Heart right ventricle (tissue), 16 donors: ENCODE measurements at regions of chr5 and their contacts with region 1.

Region 1: GRCh38 chr5:111735583-111736270 is 21.3 kb downstream of the NREP start:
- DNase-seq: peak in 1 of 2 donors; percentile 36
- ATAC-seq: peak; percentile 47 to 83 (median 58)
- H3K4me3 ChIP-seq: no peak overlapping the region
- H3K27ac ChIP-seq: peak overlapping the region in 2 of 10 donors; percentile 11 to 18
- H3K4me1 ChIP-seq: peaks cover 3 to 77% (median 40%) of the 10 kb centered on the region in 9 donors
- H3K27me3 ChIP-seq: no peaks in the 10 kb centered on the region
- CTCF ChIP-seq: no peak

Region 2: DNA sequence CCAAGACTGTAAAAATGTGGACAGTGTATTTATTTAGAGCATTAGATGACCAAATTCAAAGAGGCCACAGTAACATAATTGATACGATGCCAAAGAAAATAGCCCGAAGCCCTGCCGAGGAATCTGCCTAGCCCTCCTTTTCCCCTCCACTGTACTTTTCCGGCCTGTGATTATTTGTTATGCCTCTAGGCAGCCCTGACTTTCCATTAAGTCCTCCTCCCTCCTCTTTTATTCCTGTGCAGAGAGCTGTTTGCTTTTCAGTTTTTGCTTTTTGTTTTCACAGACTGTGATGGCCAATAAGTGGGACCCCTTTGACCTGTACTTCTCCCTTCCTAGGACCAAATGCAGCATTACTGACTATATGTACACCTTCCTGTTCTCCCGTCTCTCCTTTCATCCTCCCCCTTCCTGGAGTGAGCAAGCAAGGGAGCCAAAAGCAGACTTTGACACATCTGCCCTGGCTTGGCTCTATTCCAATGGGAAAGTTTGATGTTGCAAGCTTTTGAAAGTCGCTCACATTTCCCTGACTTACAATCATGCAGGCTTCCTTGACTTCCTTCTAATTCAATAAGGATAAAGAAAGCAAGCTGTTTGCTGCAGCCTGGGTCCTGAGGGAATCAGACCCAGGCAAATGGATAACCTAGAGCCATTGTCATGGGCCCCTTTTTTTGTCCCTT is 54.9 kb before region 1 on chr5:
- intact Hi-C with region 1: loop called in 1 of 10 experiments (anchors 5 kb)
- DNase-seq: peak; percentile 14 to 88
- ATAC-seq: peak; percentile 80 to 93 (median 86)
- H3K4me3 ChIP-seq: peak overlapping the region in 4 of 10 donors; percentile 5 to 32 (median 20)
- H3K27ac ChIP-seq: peak overlapping the region in 9 of 10 donors; percentile 23 to 80 (median 67)
- H3K4me1 ChIP-seq: peaks cover 0 to 52% (median 32%) of the 10 kb centered on the region in 9 donors
- H3K27me3 ChIP-seq: no peaks in the 10 kb centered on the region
- CTCF ChIP-seq: no peak

Region 3: GRCh38 chr5:111984044-111984443 is 248.3 kb after region 1 on chr5:
- intact Hi-C with region 1: loop called in 1 of 10 experiments (anchors 5 kb)
- DNase-seq: peak; percentile 10 to 55
- ATAC-seq: peak; percentile 41 to 97 (median 92)
- H3K4me3 ChIP-seq: no peak overlapping the region
- H3K27ac ChIP-seq: peak overlapping the region in 5 of 10 donors; percentile 2 to 45 (median 31)
- H3K4me1 ChIP-seq: peaks cover 0 to 23% (median 11%) of the 10 kb centered on the region in 9 donors
- H3K27me3 ChIP-seq: no peaks in the 10 kb centered on the region
- CTCF ChIP-seq: no peak